Right ventricle myocardium inferior (tissue), 1 donor: ENCODE measurements at regions of chr12 and their contacts with region 1.

Region 1: GRCh38 chr12:10190558-10191388 is 11.9 kb downstream of the TMEM52B start:
- DNase-seq: no peak
- ATAC-seq: peak; percentile 96

Region 2: DNA sequence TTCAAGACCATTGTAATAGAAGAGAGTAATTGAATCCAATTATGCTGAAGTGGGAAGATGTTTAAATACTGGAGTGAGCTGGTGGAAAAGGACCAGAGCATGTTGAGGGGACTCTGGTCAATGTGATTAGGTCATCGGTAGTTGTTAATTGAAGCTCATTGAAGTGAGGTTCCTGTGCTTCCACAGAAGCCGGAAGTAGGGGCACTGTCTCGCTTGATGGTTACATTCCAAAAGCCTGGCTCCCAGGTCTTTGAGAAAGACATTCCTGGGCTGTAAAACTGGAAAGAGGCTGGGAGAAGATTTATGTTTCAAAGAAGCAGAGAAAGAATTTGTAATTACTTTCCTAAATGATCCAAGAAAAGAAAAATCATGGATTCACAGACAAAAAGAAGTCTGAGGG is 445.6 kb before region 1 on chr12:
- intact Hi-C with region 1: loop called (anchors 5 kb)
- DNase-seq: no peak
- ATAC-seq: no peak

Region 3: GRCh38 chr12:9883175-9883574 is 307.6 kb before region 1 on chr12:
- intact Hi-C with region 1: no loop called
- DNase-seq: no peak
- ATAC-seq: no peak

Region 4: DNA sequence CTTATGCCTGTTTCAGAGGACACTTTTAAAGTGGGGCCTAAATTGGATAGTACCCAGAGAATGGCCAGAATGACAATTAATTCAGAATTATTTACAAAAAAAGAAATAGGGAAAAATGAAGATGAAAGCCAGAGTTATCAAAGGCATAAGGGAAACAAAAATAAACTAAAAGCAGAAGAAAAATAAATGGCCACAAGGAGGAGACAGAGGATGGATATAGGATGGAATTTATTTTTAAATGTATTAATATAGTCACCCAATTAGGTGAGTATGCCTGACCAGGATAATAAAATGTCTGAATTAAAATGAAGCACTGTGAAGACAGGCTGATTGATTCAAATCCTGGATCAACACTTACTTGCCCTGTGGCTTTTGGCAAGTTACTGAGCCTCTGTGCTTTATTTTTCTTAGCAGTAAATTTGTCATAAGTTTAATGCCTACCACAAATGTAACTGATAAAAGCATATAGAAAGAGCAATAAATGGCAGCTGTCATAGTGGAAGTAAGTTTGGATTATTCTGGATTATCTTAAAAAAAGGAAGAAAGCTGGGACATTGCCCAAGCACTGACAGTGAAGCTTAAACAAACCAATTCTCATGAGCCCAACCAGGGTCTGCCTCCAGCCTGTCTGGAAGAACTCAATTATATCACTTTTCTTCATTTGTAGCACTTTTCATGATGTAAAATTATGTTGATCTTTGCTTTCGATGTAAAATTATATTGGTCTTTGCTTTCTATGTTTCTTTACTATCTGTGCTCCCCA is 156.8 kb before region 1 on chr12:
- intact Hi-C with region 1: loop called (anchors 5 kb)
- DNase-seq: no peak
- ATAC-seq: no peak

Region 5: DNA sequence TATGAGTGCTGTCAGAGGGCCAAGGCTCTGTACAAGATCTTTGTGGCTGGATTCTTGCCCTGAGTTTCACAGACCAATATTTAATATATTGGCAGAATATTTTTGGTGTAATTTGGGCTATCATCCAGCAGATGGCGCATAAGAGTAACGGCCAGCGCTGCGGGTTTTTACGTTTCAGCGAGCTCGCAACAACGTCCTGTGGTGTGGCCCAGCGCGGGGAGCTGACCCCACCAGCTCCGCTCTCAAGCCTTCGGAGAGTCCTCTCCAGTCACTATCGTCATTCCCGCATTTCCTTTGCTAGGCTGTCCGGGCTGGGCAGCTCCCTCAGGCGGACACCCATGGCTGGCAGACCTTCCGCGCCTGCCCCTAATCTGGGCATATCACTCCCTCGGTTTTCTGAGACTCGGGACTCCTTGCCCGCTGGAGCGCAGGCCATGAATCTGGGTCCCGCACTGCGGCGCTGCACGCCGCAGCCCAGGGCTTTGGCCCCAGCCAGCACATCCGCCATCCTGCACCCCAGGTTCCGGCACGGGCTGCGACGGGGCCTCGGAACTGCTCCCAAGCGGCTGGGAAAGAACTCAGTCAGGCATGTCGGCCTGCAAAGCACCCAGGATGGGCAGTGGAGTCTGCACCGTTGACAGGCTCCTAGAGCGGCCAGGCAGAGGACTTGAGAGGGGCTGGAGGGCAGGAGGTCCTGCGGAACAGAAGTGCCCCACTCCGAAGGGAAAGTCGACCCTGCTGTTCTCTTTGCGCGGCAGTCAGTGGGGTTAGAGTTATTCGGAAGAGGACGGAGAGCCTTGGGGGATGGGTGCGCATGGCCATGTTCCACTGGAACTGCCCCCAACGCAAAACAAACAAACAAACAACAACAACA is 37.3 kb before region 1 on chr12:
- intact Hi-C with region 1: loop called (anchors 1 kb)
- DNase-seq: peak; percentile 87
- ATAC-seq: peak; percentile 93

Region 6: GRCh38 chr12:10212201-10213131 is 21.7 kb after region 1 on chr12 and contains the start of gene GABARAPL1:
- intact Hi-C with region 1: no loop called
- DNase-seq: peak; percentile 98
- ATAC-seq: peak; percentile 96
- total RNA-seq, gene GABARAPL1: 282 TPM

Region 7: GRCh38 chr12:10235761-10236631 is 45.2 kb after region 1 on chr12:
- intact Hi-C with region 1: no loop called
- DNase-seq: peak; percentile 69
- ATAC-seq: peak; percentile 81